Motor neuron (in vitro differentiated cells): ENCODE measurements at regions of chr14 and their contacts with region 1.

Region 1: DNA sequence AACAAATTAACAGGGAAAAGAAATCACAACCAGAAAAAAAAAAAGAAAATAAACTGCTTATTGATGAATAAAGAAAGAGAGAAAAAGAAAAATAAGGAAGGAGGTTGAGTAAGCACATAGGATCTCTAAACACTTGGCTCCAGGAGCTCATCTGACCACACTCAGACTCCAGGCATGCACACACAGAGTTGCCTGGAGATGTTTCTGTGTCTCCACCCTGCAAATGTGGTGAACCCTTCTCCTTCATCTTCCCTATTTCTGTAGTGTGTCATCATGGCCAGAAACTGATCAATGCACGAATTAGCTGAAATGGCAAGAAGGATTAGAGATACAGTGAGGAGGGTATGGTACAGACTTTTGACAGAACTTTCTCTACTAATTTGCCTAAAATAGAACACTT is 20.2 kb downstream of the OR4N2 start:
- ATAC-seq: peak in 1 of 8 experiments; percentile 33
- H3K4me3 ChIP-seq: no peak overlapping the region
- H3K27ac ChIP-seq: no peak overlapping the region
- H3K4me1 ChIP-seq: no peaks in the 10 kb centered on the region

Region 2: DNA sequence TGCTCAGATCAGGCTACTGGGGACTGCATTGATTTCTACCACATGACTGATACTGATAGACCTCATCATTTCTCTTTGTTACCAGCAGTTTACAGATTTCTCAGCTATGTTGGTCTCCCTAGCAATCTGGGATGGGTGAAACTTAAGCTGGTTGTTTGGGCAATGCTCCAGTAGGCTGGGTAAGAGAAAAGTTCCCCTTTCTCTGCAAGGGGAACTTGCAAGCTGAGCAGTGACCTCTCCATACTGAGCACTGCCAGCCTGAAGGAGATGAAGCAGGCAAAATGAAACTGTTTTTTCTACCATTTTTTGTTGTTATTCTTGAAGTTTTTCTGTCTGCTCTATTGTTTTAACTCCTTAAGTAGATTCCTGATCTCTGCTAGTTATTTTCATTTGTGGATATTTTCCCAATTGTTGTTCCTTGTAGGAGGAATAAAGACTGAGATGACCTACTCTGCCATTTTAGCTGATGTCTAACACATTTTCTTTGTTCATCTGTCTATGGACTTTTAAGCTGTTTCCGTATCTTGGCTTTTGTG is 51.8 kb before region 1 on chr14:
- in situ Hi-C with region 1: loop called in 1 of 9 experiments (anchors 10 kb)
- ATAC-seq: no peak
- H3K4me3 ChIP-seq: no peak overlapping the region
- H3K27ac ChIP-seq: no peak overlapping the region
- H3K4me1 ChIP-seq: no peaks in the 10 kb centered on the region